G401 (cell line): ENCODE measurements at regions of chr9 and their contacts with region 1.

Region 1: GRCh38 chr9:70484210-70485130 is 70.0 kb upstream of the KLF9 start:
- DNase-seq: peak; percentile 86

Region 2: DNA sequence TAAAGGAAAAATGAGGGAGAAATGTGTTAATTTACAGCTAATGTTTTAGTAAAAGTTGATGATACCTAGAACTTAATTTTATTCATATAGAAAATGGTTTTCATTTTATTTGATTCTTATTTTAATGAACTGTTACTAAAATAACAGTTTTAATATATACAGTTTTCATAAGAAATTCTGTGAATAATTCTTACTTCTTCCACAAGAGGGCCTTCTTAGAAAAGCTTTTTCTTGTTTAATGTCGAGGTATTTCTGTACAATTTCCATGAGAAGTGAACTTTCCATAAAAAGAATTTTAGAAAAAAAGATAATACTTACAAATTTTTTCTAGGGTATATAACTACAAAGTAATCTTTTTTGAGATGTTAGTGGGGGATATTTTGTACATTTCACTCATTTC is 143.9 kb before region 1 on chr9:
- in situ Hi-C with region 1: loop called (anchors 25 kb)
- DNase-seq: peak; percentile 71

Region 3: GRCh38 chr9:70444904-70445303 is 39.6 kb before region 1 on chr9:
- in situ Hi-C with region 1: no loop called
- DNase-seq: no peak

Region 4: DNA sequence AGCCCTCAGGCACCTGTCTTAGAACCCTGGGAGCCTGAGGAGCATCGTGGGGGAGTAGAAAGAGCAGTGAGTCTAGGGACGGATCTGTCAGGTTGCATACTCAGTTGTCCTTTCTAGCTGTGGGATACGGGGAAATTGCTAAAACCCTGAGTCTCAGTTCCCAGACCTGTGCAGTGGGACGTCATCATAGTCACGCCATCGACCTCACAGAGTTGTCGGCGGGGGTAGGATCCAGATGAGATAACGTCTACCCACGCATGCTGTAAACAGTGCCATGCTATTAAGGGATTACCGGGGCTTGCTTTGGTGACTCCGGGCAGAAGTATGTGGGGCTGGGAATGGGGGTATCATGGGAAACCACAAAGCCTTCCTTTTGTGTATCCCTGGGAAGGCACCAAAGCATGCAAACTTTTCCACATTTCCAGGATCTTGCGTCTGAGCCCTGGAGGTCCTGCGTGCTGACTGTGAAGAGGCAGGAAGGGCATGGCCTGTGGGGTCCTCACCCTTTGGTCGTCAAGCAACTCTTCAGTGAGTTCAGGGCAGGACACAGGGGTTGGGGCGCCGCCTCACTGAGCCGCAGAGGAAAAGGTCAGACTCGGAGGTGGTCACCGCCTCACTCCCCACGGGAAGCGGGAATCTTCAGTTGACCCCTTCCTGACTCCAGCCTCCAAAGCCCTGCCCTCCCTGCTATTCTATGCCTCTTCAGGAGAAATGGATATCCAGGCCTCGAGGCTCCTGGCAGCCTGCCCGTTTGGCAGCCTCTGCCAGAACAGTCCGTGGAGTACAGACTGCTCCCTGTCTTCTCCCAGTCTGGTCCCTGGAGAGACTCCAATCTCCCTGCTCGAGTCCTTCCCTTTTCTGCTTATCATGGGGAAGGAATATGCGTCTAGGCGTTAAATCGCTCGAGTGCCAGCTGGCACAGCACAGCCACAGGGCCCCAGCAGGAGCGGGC is 116.8 kb after region 1 on chr9:
- in situ Hi-C with region 1: no loop called
- DNase-seq: peak; percentile 99